Right ventricle myocardium inferior (tissue), 1 donor: ENCODE measurements at regions of chr7 and their contacts with region 1.

Region 1: GRCh38 chr7:70693686-70694360 is 438.1 kb upstream of the GALNT17 start:
- DNase-seq: peak; percentile 87
- ATAC-seq: peak; percentile 89

Region 2: DNA sequence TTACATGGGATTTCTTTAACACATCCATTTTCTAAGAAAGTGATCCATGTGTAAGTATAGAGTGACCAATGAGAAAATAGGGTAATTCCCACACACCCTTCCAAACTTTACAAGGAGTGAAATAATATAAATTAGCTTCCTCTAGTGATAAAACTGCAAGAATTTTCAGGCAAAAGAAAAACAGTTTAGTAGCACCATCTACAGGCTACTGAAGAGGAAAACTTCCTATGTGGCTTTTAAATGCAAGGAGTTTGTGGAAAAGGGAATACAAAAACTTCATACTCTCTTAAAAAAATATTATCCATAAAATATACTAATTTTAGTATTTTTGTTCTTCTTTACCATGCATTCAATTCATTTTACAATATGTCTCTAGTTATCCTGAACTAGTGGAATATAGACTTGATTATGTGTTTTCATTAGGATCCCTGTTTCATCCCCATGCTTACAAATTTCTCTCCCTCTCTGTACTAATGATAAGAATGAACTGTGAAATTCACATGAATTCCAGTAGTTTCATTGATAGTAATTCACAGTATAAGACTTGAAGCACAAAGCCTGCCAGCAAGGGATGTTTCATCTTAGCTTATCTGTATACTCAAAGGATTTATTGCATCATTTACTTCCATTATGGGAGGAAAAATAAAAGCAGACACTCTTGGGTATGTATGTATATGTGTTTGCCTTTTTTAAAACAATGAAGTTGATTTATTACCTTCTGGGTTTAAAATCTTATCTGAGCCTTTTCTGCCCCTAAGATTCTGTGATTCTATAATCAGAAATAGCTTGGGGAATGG is 652.7 kb before region 1 on chr7:
- intact Hi-C with region 1: loop called (anchors 5 kb)
- DNase-seq: no peak
- ATAC-seq: no peak

Region 3: GRCh38 chr7:70165477-70166170 is 528.2 kb before region 1 on chr7:
- intact Hi-C with region 1: loop called (anchors 10 kb)
- DNase-seq: no peak
- ATAC-seq: no peak

Region 4: DNA sequence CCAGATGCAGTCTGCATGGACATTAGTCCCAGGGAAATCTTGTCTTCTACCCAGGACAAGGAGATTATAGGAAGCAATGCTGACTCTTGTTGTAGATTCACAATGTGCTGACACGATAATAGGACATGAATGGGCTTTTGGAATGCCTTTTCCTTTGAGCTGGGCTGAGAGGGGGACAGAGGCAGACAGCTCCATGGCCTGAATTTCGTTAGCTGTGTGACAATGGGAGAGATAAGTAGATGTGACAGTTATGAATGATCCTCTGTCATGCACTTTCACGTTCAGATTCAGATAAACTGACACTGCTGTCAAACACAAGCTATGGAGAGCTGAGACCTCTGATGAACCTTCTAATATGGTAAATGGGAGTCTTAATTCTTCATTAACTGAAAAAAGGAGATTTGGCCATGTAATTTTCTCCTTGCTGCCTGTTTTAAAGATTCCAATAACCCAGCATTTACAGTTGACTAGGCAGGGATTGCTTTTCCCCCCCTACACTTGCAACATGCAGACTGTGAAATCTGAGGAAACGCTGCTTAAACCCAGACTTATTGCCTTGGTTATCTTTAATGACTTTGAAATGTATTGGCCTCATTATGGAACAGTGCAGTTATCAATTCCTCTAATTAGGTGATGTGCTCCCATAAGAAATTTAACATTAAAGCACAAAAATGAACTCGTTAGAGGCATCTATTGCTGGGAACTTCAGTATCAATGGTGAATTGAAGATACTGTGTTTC is 426.3 kb before region 1 on chr7:
- intact Hi-C with region 1: no loop called
- DNase-seq: no peak
- ATAC-seq: no peak

Region 5: GRCh38 chr7:70614237-70615045 is 79.4 kb before region 1 on chr7:
- intact Hi-C with region 1: loop called (anchors 10 kb)
- DNase-seq: peak; percentile 91
- ATAC-seq: peak; percentile 93